Psoas muscle (tissue), 8 donors: ENCODE measurements at regions of chr16 and their contacts with region 1.

Region 1: GRCh38 chr16:35689764-35690163 is 2230.4 kb downstream of the TP53TG3F start:
- DNase-seq: no peak
- ATAC-seq: no peak
- H3K4me3 ChIP-seq: no peak overlapping the region
- H3K27ac ChIP-seq: no peak overlapping the region
- H3K4me1 ChIP-seq: no peaks in the 10 kb centered on the region
- H3K27me3 ChIP-seq: no peaks in the 10 kb centered on the region
- CTCF ChIP-seq: no peak

Region 2: GRCh38 chr16:35744716-35745115 is 55.0 kb after region 1 on chr16:
- intact Hi-C with region 1: loop called in 1 of 2 experiments (anchors 10 kb)
- DNase-seq: no peak
- ATAC-seq: no peak
- H3K4me3 ChIP-seq: no peak overlapping the region
- H3K27ac ChIP-seq: no peak overlapping the region
- H3K4me1 ChIP-seq: no peaks in the 10 kb centered on the region
- H3K27me3 ChIP-seq: no peaks in the 10 kb centered on the region
- CTCF ChIP-seq: no peak